Calu3 (cell line): ENCODE measurements at regions of chr18 and their contacts with region 1.

Region 1: GRCh38 chr18:49100226-49100968 is 149.6 kb upstream of the SMAD7 start:
- DNase-seq: peak; percentile 25
- H3K4me3 Mint-ChIP-seq: no peak overlapping the region
- H3K27ac Mint-ChIP-seq: no peak overlapping the region
- H3K4me1 Mint-ChIP-seq: peaks cover 32% of the 10 kb centered on the region
- H3K27me3 Mint-ChIP-seq: no peaks in the 10 kb centered on the region
- CTCF ChIP-seq: no peak

Region 2: DNA sequence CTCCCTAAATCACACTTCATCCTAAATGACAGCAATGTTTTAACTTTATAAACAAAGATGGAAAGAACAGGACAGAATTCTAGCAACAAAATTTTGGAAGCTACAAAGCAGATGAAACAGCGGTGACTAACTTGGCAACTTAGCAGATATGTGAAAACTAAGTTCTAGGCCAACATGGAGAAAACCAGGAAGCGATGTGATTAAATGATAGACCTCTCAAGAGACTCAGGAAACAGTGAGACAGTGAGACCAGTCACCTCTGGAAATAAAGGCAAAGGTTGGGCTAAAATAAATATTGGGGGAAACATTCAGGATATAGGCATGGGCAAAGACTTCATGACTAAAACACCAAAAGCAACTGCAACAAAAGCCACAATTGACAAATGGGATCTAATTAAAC is 666.9 kb before region 1 on chr18:
- CTCF ChIA-PET with region 1: no interaction called
- intact Hi-C with region 1: no loop called
- DNase-seq: no peak
- H3K4me3 Mint-ChIP-seq: no peak overlapping the region
- H3K27ac Mint-ChIP-seq: no peak overlapping the region
- H3K4me1 Mint-ChIP-seq: no peaks in the 10 kb centered on the region
- H3K27me3 Mint-ChIP-seq: peaks cover 70% of the 10 kb centered on the region
- CTCF ChIP-seq: no peak

Region 3: DNA sequence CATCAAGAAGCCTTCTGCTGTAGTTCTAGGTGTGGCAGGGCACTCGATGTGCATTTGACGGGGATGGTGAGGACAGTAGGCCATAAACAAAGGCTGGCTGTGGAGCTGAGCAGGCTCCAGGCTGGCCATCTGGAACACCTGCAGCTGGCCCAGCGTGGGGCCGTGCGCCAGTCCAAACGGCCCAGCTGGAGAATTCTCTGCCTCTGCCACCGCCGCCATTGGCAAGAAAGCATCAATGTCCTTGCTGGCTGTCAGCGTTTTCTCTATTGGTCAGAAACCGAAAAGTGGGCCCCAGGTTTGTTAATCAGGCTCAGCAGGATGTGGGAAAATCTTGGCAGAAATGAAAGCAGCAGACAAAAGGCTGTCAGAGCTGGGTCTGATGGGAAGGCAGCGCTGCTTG is 585.6 kb before region 1 on chr18:
- CTCF ChIA-PET with region 1: no interaction called
- intact Hi-C with region 1: no loop called
- DNase-seq: no peak
- H3K4me3 Mint-ChIP-seq: no peak overlapping the region
- H3K27ac Mint-ChIP-seq: no peak overlapping the region
- H3K4me1 Mint-ChIP-seq: peaks cover 2% of the 10 kb centered on the region
- H3K27me3 Mint-ChIP-seq: peaks cover 39% of the 10 kb centered on the region
- CTCF ChIP-seq: no peak

Region 4: DNA sequence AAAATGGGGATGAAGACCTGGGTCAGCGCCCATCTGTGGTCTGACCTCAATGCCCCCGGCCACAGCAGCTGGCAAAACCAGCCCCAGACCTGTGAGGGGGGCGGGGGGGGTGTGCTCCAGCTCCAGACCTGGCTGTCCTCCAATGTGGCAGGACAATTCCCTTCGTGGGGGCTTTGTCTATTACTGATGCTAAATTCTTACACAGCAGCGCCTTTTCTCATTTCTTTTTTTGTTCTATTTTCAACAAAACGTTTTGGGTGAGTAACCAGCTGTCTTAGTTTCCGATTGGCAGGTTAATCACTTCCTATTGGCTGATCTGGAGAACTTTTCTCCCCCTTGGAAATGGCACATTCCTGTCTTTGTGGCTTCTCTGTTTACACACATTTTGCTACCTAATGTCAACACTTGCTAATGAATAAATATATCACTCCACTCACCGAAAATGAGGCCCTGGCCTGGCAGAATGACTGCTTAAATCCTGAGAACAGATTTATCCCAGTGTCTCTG is 154.0 kb before region 1 on chr18:
- CTCF ChIA-PET with region 1: no interaction called
- intact Hi-C with region 1: loop called (anchors 2 kb)
- DNase-seq: peak; percentile 43
- H3K4me3 Mint-ChIP-seq: peak overlapping the region; percentile 77
- H3K27ac Mint-ChIP-seq: peak overlapping the region; percentile 77
- H3K4me1 Mint-ChIP-seq: peaks cover 67% of the 10 kb centered on the region
- H3K27me3 Mint-ChIP-seq: no peaks in the 10 kb centered on the region
- CTCF ChIP-seq: no peak

Region 5: GRCh38 chr18:49178736-49179135 is 78.3 kb after region 1 on chr18:
- CTCF ChIA-PET with region 1: interaction called, 7 read pairs
- intact Hi-C with region 1: loop called (anchors 5 kb)
- DNase-seq: peak; percentile 42
- H3K4me3 Mint-ChIP-seq: no peak overlapping the region
- H3K27ac Mint-ChIP-seq: no peak overlapping the region
- H3K4me1 Mint-ChIP-seq: peaks cover 12% of the 10 kb centered on the region
- H3K27me3 Mint-ChIP-seq: no peaks in the 10 kb centered on the region
- CTCF ChIP-seq: peak; percentile 70